ENCODE measurements at regions of chr2 and their contacts with region 1.

Region 1: GRCh38 chr2:149561309-149561926 is 26.2 kb downstream of the MMADHC start:
- DNase-seq: peak in 6 of 9 donors; percentile 3 to 53 (median 43)
- ATAC-seq: peak; percentile 47
- H3K4me3 ChIP-seq: no peak overlapping the region
- H3K4me3 Mint-ChIP-seq: no peak overlapping the region
- H3K27ac ChIP-seq: no peak overlapping the region
- H3K27ac Mint-ChIP-seq: no peak overlapping the region
- H3K4me1 ChIP-seq: no peaks in the 10 kb centered on the region
- H3K4me1 Mint-ChIP-seq: peaks cover 0 to 5% (median 0%) of the 10 kb centered on the region in 7 donors
- H3K27me3 ChIP-seq: no peaks in the 10 kb centered on the region
- H3K27me3 Mint-ChIP-seq: peaks cover 0 to 8% (median 7%) of the 10 kb centered on the region in 5 donors

Region 2: DNA sequence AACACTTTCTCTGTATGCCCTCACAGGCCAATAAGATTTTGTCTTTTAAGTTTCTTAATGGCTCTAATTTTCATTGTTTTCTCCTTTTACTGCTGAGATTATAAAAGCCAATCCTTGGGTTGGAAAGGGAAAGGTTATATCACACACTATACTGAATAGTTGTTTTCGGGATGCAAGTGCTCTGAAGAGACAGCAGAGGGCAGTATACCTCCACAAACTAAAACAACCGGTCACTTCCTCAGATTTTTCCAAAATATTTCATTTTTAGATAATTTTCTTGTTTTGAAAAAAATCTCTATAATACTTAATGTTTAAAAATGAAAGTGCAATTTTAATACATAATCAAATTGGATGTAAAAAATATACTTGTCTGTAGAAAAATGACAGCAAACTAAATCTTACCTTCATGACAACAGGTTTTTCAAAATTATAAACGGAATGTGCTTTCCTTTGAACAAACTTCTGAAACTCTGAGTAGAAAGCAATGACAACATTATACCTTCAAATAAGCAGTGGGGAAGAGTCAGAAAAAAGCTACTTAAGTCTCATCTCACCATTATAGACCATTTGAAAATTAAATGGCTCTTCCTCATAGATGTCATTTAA is 1623.6 kb before region 1 on chr2:
- CTCF ChIA-PET with region 1: no interaction called
- POLR2A ChIA-PET with region 1: no interaction called
- intact Hi-C with region 1: loop called (anchors 1 to 10 kb)
- DNase-seq: peak in 5 of 9 donors; percentile 25 to 40 (median 34)
- ATAC-seq: peak; percentile 79
- H3K4me3 ChIP-seq: no peak overlapping the region
- H3K4me3 Mint-ChIP-seq: no peak overlapping the region
- H3K27ac ChIP-seq: no peak overlapping the region
- H3K27ac Mint-ChIP-seq: peak overlapping the region in 4 of 9 donors; percentile 26 to 75 (median 42)
- H3K4me1 ChIP-seq: no peaks in the 10 kb centered on the region
- H3K4me1 Mint-ChIP-seq: peaks cover 0 to 2% (median 0%) of the 10 kb centered on the region in 7 donors
- H3K27me3 ChIP-seq: no peaks in the 10 kb centered on the region
- H3K27me3 Mint-ChIP-seq: no peaks in the 10 kb centered on the region

Region 3: GRCh38 chr2:148509288-148509902 is 1052.0 kb before region 1 on chr2:
- CTCF ChIA-PET with region 1: interaction called, 3 read pairs
- POLR2A ChIA-PET with region 1: no interaction called
- intact Hi-C with region 1: loop called in 1 of 2 experiments (anchors 5 kb)
- DNase-seq: peak; percentile 54 to 86 (median 78)
- ATAC-seq: peak; percentile 100
- H3K4me3 ChIP-seq: peak overlapping the region; percentile 51
- H3K4me3 Mint-ChIP-seq: peak overlapping the region; percentile 65 to 91 (median 84)
- H3K27ac ChIP-seq: peak overlapping the region; percentile 37
- H3K27ac Mint-ChIP-seq: peak overlapping the region; percentile 13 to 90 (median 88)
- H3K4me1 ChIP-seq: no peaks in the 10 kb centered on the region
- H3K4me1 Mint-ChIP-seq: peaks cover 3 to 29% (median 16%) of the 10 kb centered on the region in 7 donors
- H3K27me3 ChIP-seq: no peaks in the 10 kb centered on the region
- H3K27me3 Mint-ChIP-seq: no peaks in the 10 kb centered on the region

Region 4: GRCh38 chr2:148926291-148926961 is 635.0 kb before region 1 on chr2:
- CTCF ChIA-PET with region 1: no interaction called
- POLR2A ChIA-PET with region 1: no interaction called
- intact Hi-C with region 1: loop called in 1 of 2 experiments (anchors 10 kb)
- DNase-seq: peak; percentile 21 to 60 (median 48)
- ATAC-seq: peak; percentile 89
- H3K4me3 ChIP-seq: peak overlapping the region; percentile 43
- H3K4me3 Mint-ChIP-seq: peak overlapping the region; percentile 77 to 88 (median 84)
- H3K27ac ChIP-seq: no peak overlapping the region
- H3K27ac Mint-ChIP-seq: peak overlapping the region; percentile 29 to 94 (median 83)
- H3K4me1 ChIP-seq: peaks cover 0 to 7% of the 10 kb centered on the region in 2 donors
- H3K4me1 Mint-ChIP-seq: peaks cover 9 to 29% (median 22%) of the 10 kb centered on the region in 7 donors
- H3K27me3 ChIP-seq: no peaks in the 10 kb centered on the region
- H3K27me3 Mint-ChIP-seq: no peaks in the 10 kb centered on the region

Region 5: DNA sequence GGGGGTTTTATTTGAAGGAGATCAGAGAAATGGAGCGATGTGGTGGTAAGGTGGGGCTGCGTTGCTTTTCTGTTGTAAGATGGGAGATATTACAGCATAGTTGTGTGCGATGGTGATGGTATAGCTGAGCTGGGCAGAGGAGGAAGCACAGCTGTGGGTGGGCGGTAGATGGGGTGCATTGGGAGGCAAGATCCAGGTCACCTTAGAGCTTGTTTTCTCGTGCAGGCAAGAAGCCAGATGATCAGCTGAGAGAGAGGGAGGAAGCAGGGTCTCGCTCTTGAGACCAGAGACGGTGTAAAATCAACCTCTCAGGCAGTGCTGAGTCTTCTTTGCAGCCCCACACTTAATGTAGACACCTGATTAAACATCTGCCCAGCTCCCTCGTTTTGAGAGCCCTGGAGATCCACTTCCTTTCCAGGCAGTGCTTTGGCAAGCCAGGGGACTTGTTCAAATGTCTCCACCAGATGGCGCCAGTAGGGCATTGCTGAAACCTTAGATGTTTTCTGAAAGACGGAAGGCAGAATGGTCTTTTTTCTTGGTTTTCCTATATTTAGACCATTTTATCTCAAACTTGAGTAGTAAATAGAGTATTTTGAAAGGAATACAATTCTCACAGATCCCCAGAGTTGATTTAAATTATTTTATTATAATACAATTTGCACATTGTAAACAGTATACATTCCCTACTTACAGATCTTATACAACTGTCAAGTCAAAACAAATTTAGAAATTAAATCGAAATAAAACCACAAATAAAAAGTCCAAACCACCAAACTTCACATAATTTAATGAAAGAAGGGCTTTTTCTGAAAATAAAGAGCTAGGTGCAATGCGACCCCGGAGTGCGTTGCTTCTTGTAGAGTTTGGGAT is 544.1 kb before region 1 on chr2:
- CTCF ChIA-PET with region 1: interaction called, 11 read pairs
- POLR2A ChIA-PET with region 1: no interaction called
- intact Hi-C with region 1: loop called (anchors 1 kb)
- DNase-seq: peak; percentile 24 to 71 (median 60)
- ATAC-seq: peak; percentile 82
- H3K4me3 ChIP-seq: no peak overlapping the region
- H3K4me3 Mint-ChIP-seq: no peak overlapping the region
- H3K27ac ChIP-seq: no peak overlapping the region
- H3K27ac Mint-ChIP-seq: no peak overlapping the region
- H3K4me1 ChIP-seq: no peaks in the 10 kb centered on the region
- H3K4me1 Mint-ChIP-seq: peaks cover 0 to 10% (median 5%) of the 10 kb centered on the region in 7 donors
- H3K27me3 ChIP-seq: no peaks in the 10 kb centered on the region
- H3K27me3 Mint-ChIP-seq: no peaks in the 10 kb centered on the region

Region 6: GRCh38 chr2:149087751-149088150 is 473.7 kb before region 1 on chr2:
- CTCF ChIA-PET with region 1: no interaction called
- POLR2A ChIA-PET with region 1: no interaction called
- intact Hi-C with region 1: loop called in 1 of 2 experiments (anchors 1 kb)
- DNase-seq: no peak
- ATAC-seq: no peak
- H3K4me3 ChIP-seq: no peak overlapping the region
- H3K4me3 Mint-ChIP-seq: no peak overlapping the region
- H3K27ac ChIP-seq: no peak overlapping the region
- H3K27ac Mint-ChIP-seq: peak overlapping the region in 1 of 9 donors; percentile 41
- H3K4me1 ChIP-seq: no peaks in the 10 kb centered on the region
- H3K4me1 Mint-ChIP-seq: peaks cover 0 to 1% (median 0%) of the 10 kb centered on the region in 7 donors
- H3K27me3 ChIP-seq: no peaks in the 10 kb centered on the region
- H3K27me3 Mint-ChIP-seq: peaks cover 16 to 29% (median 18%) of the 10 kb centered on the region in 5 donors

Region 7: GRCh38 chr2:149430743-149431737 is 130.4 kb before region 1 on chr2:
- CTCF ChIA-PET with region 1: no interaction called
- POLR2A ChIA-PET with region 1: no interaction called
- intact Hi-C with region 1: loop called in 1 of 2 experiments (anchors 10 kb)
- DNase-seq: no peak
- ATAC-seq: no peak
- H3K4me3 ChIP-seq: no peak overlapping the region
- H3K4me3 Mint-ChIP-seq: no peak overlapping the region
- H3K27ac ChIP-seq: no peak overlapping the region
- H3K27ac Mint-ChIP-seq: no peak overlapping the region
- H3K4me1 ChIP-seq: no peaks in the 10 kb centered on the region
- H3K4me1 Mint-ChIP-seq: no peaks in the 10 kb centered on the region
- H3K27me3 ChIP-seq: no peaks in the 10 kb centered on the region
- H3K27me3 Mint-ChIP-seq: peaks cover 0 to 15% (median 8%) of the 10 kb centered on the region in 5 donors

Measured in naive thymus-derived CD4-positive, alpha-beta T cell (primary cell).